ENCODE measurements at regions of chr20 and their contacts with region 1.

Region 1: GRCh38 chr20:62088237-62089127 is 22.8 kb upstream of the TAF4 start:
- DNase-seq: peak; percentile 61 to 73 (median 70)
- ATAC-seq: peak; percentile 82
- H3K4me3 ChIP-seq: no peak overlapping the region
- H3K27ac ChIP-seq: no peak overlapping the region; the same call in 2 of the 3 replicates
- H3K4me1 ChIP-seq: peaks cover 3 to 7% of the 10 kb centered on the region in 2 experiments; a peak in 4 of 5 replicates
- H3K27me3 ChIP-seq: peaks cover 37 to 65% of the 10 kb centered on the region in 2 experiments
- CTCF ChIP-seq: no peak
- EP300 ChIP-seq: no peak; the same call in 1 of the 2 replicates
- POLR2A ChIP-seq: no peak
- RAD21 ChIP-seq: no peak

Region 2: GRCh38 chr20:61765871-61766654 is 322.4 kb before region 1 on chr20:
- CTCF ChIA-PET with region 1: no interaction called
- POLR2A ChIA-PET with region 1: no interaction called
- in situ Hi-C with region 1: no loop called
- intact Hi-C with region 1: no loop called
- DNase-seq: peak in 3 of 4 experiments; percentile 77 to 79 (median 78)
- ATAC-seq: peak; percentile 76
- H3K4me3 ChIP-seq: no peak overlapping the region
- H3K27ac ChIP-seq: no peak overlapping the region
- H3K4me1 ChIP-seq: no peaks in the 10 kb centered on the region
- H3K27me3 ChIP-seq: peaks cover 21 to 65% of the 10 kb centered on the region in 2 experiments
- CTCF ChIP-seq: no peak
- EP300 ChIP-seq: no peak
- POLR2A ChIP-seq: no peak
- RAD21 ChIP-seq: no peak

Region 3: GRCh38 chr20:62065669-62066338 is 22.7 kb before region 1 on chr20 and contains the start of gene TAF4:
- CTCF ChIA-PET with region 1: no interaction called
- POLR2A ChIA-PET with region 1: interaction called, 14 read pairs
- in situ Hi-C with region 1: no loop called
- intact Hi-C with region 1: no loop called
- DNase-seq: peak; percentile 78 to 99 (median 98)
- ATAC-seq: peak; percentile 71
- H3K4me3 ChIP-seq: peak within 1 kb of the TSS; percentile 64
- H3K27ac ChIP-seq: peak within 1 kb of the TSS; percentile 79
- H3K4me1 ChIP-seq: peaks cover 19 to 36% of the 10 kb centered on the region in 2 experiments
- H3K27me3 ChIP-seq: no peaks in the 10 kb centered on the region; a peak in 1 of 5 replicates
- CTCF ChIP-seq: no peak
- EP300 ChIP-seq: no peak
- POLR2A ChIP-seq: peak; percentile 54; the same call in 1 of the 2 replicates
- RAD21 ChIP-seq: no peak
- polyA plus RNA-seq, gene TAF4: 0.44 to 0.48 TPM

Region 4: DNA sequence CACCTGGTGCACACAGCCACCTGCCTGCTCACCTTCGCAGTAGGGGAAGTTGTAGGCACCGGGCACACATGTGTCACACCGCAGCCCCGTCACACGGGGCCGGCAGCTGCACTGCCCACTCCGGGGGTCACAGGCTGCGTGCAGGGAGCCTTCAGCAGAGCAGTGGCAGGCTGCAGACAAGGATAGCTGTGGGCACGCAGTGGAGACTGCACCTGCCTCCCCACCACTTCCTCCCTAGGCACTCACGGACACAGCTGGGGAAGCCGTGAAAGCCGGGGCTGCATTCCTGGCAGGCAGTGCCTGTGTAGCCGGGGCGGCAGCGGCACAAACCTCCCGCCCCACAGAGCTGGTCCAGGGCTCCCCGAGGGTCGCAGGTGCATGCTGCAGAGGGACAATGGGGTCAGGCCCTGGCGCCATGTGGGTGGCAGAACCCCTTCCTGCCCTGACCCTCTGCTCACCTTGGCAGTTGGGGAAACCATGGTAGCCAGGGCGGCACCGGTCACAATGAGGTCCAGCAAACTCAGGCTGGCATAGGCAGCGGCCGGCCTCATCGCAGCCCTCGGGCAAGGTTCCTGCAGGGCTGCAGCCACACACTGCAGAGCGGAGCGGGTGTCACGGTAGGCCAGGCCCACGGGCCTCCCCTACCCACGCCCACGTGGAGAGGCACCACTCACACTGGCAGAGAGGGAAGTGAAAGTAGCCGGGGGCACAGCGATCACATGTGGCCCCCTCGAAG is 249.2 kb after region 1 on chr20:
- CTCF ChIA-PET with region 1: no interaction called
- POLR2A ChIA-PET with region 1: no interaction called
- in situ Hi-C with region 1: no loop called
- intact Hi-C with region 1: no loop called
- DNase-seq: no peak
- ATAC-seq: no peak
- H3K4me3 ChIP-seq: no peak overlapping the region
- H3K27ac ChIP-seq: no peak overlapping the region
- H3K4me1 ChIP-seq: peaks cover 0 to 15% of the 10 kb centered on the region in 2 experiments; a peak in 1 of 5 replicates
- H3K27me3 ChIP-seq: no peaks in the 10 kb centered on the region
- CTCF ChIP-seq: no peak
- EP300 ChIP-seq: no peak
- POLR2A ChIP-seq: no peak
- RAD21 ChIP-seq: no peak